B cell (primary cell): ENCODE measurements at regions of chr10 and their contacts with region 1.

Region 1: DNA sequence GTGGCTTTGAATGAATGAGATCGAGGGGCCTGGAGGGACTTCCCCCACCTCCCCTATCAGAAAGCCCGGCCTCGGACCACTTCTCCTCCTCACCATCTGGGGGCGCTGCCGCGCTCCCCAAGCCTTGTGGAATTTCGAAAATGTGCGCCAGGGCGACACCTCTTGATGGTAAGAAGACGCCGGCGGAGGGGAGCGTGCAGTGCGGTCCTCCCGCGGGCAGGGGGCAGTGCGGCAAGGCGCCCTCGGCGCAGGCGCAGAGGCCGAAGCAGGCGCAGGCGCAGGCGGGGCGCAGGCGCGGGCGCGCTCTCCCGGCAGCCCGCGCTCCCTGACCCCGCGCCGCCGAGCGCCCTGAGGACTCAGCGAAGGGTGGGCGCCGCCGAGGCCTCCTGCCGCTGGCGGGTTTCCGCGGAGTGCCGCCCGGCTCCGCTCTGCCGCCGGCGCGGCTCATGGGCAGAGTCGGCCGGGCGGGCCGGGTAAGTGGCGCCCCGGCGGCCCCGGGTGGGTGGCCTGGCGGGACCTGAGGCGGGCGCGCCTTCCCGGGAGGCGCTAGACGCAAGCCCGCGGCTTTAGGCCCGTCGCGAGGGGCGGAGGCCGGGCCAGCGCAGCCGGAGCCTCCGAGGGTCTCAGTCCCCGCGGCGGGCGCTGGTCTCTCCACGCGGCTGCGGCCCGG is at the start of gene RBM17:
- DNase-seq: peak; percentile 99
- ATAC-seq: peak; percentile 88
- H3K4me3 ChIP-seq: peak within 1 kb of the TSS; percentile 70 to 94 (median 77)
- H3K4me3 Mint-ChIP-seq: peak within 1 kb of the TSS; percentile 90
- H3K27ac ChIP-seq: peak within 1 kb of the TSS in 1 of 2 donors; percentile 78
- H3K27ac Mint-ChIP-seq: peak within 1 kb of the TSS; percentile 92
- H3K4me1 ChIP-seq: peaks cover 41 to 43% of the 10 kb centered on the region in 2 donors
- H3K4me1 Mint-ChIP-seq: peaks cover 63% of the 10 kb centered on the region
- H3K27me3 ChIP-seq: no peaks in the 10 kb centered on the region
- H3K27me3 Mint-ChIP-seq: no peaks in the 10 kb centered on the region
- CTCF ChIP-seq: peak; percentile 100
- total RNA-seq, gene RBM17: 162 and 168 TPM in 2 replicates

Region 2: GRCh38 chr10:5840314-5841307 is 248.2 kb before region 1 on chr10:
- CTCF ChIA-PET with region 1: interaction called, 4 read pairs
- POLR2A ChIA-PET with region 1: no interaction called
- intact Hi-C with region 1: loop called (anchors 5 kb)
- DNase-seq: peak; percentile 92
- ATAC-seq: peak; percentile 82
- H3K4me3 ChIP-seq: peak overlapping the region in 4 of 5 experiments; percentile 55 to 63 (median 58)
- H3K4me3 Mint-ChIP-seq: peak overlapping the region; percentile 94
- H3K27ac ChIP-seq: peak overlapping the region; percentile 99 to 100
- H3K27ac Mint-ChIP-seq: peak overlapping the region; percentile 100
- H3K4me1 ChIP-seq: peaks cover 68 to 77% of the 10 kb centered on the region in 2 donors
- H3K4me1 Mint-ChIP-seq: peaks cover 70% of the 10 kb centered on the region
- H3K27me3 ChIP-seq: no peaks in the 10 kb centered on the region
- H3K27me3 Mint-ChIP-seq: no peaks in the 10 kb centered on the region
- CTCF ChIP-seq: no peak

Region 3: GRCh38 chr10:5902511-5903274 is 186.2 kb before region 1 on chr10:
- CTCF ChIA-PET with region 1: no interaction called
- POLR2A ChIA-PET with region 1: no interaction called
- intact Hi-C with region 1: no loop called
- DNase-seq: no peak
- ATAC-seq: no peak
- H3K4me3 ChIP-seq: no peak overlapping the region
- H3K4me3 Mint-ChIP-seq: no peak overlapping the region
- H3K27ac ChIP-seq: no peak overlapping the region
- H3K27ac Mint-ChIP-seq: no peak overlapping the region
- H3K4me1 ChIP-seq: peaks cover 5 to 7% of the 10 kb centered on the region in 2 donors
- H3K4me1 Mint-ChIP-seq: peaks cover 15% of the 10 kb centered on the region
- H3K27me3 ChIP-seq: no peaks in the 10 kb centered on the region
- H3K27me3 Mint-ChIP-seq: no peaks in the 10 kb centered on the region
- CTCF ChIP-seq: no peak

Region 4: GRCh38 chr10:6014241-6014761 is 74.6 kb before region 1 on chr10:
- CTCF ChIA-PET with region 1: interaction called, 94 read pairs
- POLR2A ChIA-PET with region 1: interaction called, 14 read pairs
- intact Hi-C with region 1: loop called (anchors 1 kb)
- DNase-seq: peak; percentile 79
- ATAC-seq: peak; percentile 79
- H3K4me3 ChIP-seq: no peak overlapping the region
- H3K4me3 Mint-ChIP-seq: no peak overlapping the region
- H3K27ac ChIP-seq: peak overlapping the region; percentile 34 to 57
- H3K27ac Mint-ChIP-seq: peak overlapping the region; percentile 67
- H3K4me1 ChIP-seq: peaks cover 4 to 9% of the 10 kb centered on the region in 2 donors
- H3K4me1 Mint-ChIP-seq: peaks cover 10% of the 10 kb centered on the region
- H3K27me3 ChIP-seq: no peaks in the 10 kb centered on the region
- H3K27me3 Mint-ChIP-seq: no peaks in the 10 kb centered on the region
- CTCF ChIP-seq: peak; percentile 86

Region 5: GRCh38 chr10:6050801-6051445 is 37.9 kb before region 1 on chr10:
- CTCF ChIA-PET with region 1: interaction called, 186 read pairs
- POLR2A ChIA-PET with region 1: interaction called, 28 read pairs
- intact Hi-C with region 1: loop called (anchors 1 kb)
- DNase-seq: peak; percentile 96
- ATAC-seq: peak; percentile 66
- H3K4me3 ChIP-seq: peak overlapping the region; percentile 35 to 63 (median 55)
- H3K4me3 Mint-ChIP-seq: peak overlapping the region; percentile 91
- H3K27ac ChIP-seq: peak overlapping the region; percentile 92
- H3K27ac Mint-ChIP-seq: peak overlapping the region; percentile 99
- H3K4me1 ChIP-seq: peaks cover 69 to 82% of the 10 kb centered on the region in 2 donors
- H3K4me1 Mint-ChIP-seq: peaks cover 87% of the 10 kb centered on the region
- H3K27me3 ChIP-seq: no peaks in the 10 kb centered on the region
- H3K27me3 Mint-ChIP-seq: no peaks in the 10 kb centered on the region
- CTCF ChIP-seq: peak; percentile 35

Region 6: GRCh38 chr10:6074489-6075301 is 14.2 kb before region 1 on chr10:
- CTCF ChIA-PET with region 1: interaction called, 163 read pairs
- POLR2A ChIA-PET with region 1: interaction called, 10 read pairs
- intact Hi-C with region 1: loop called (anchors 1 kb)
- DNase-seq: no peak
- ATAC-seq: no peak
- H3K4me3 ChIP-seq: no peak overlapping the region
- H3K4me3 Mint-ChIP-seq: no peak overlapping the region
- H3K27ac ChIP-seq: no peak overlapping the region
- H3K27ac Mint-ChIP-seq: peak overlapping the region; percentile 61
- H3K4me1 ChIP-seq: peaks cover 35 to 38% of the 10 kb centered on the region in 2 donors
- H3K4me1 Mint-ChIP-seq: peaks cover 46% of the 10 kb centered on the region
- H3K27me3 ChIP-seq: no peaks in the 10 kb centered on the region
- H3K27me3 Mint-ChIP-seq: no peaks in the 10 kb centered on the region
- CTCF ChIP-seq: no peak

Region 7: DNA sequence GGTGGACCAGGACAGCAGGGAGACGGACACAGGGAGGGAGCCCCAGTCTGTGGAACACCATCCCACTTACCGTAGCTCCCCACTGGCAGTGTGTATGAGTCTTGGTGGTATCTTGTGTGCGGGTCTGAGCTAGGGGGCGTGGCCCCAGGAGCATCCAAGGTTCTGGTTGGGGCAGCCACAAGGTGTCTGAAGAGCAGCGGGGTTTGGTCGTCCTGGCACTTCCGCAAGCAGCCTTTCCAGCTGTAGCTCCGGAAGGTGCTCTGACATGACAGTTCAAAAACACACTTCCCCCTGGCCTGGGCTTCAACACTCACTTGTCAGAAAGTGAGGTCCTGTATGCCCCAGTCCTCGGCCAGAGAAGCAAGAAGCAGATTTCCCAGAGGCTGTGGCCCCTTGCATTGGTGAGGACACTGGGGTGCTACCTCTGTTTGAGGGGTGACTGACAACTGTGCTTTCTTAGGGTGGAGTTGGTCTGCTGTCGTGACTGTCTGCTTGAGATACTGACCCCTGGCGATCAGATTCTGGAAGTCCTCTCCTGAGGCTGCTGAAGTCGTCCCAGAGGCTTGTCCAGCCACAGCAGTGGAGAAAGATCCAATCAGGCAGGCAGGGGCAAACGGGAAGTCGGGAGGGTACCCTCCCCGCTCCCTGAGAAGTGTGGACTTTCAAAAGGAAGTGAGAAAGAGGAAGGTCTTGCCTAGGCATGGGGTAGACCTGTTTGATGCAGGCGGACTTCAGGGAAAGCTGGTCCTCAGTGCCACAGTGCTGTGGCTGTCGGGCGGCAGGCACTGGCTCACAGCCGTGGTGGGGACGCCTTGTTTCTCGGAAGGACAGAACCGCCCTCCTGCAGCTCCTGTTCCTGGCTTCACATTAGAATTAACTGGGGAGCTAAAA is 62.5 kb after region 1 on chr10:
- CTCF ChIA-PET with region 1: interaction called, 8 read pairs
- POLR2A ChIA-PET with region 1: no interaction called
- intact Hi-C with region 1: loop called (anchors 2 kb)
- DNase-seq: peak; percentile 84
- ATAC-seq: peak; percentile 84
- H3K4me3 ChIP-seq: peak overlapping the region; percentile 6 to 58 (median 26)
- H3K4me3 Mint-ChIP-seq: peak overlapping the region; percentile 85
- H3K27ac ChIP-seq: peak overlapping the region; percentile 40 to 78
- H3K27ac Mint-ChIP-seq: peak overlapping the region; percentile 87
- H3K4me1 ChIP-seq: peaks cover 24 to 34% of the 10 kb centered on the region in 2 donors
- H3K4me1 Mint-ChIP-seq: peaks cover 53% of the 10 kb centered on the region
- H3K27me3 ChIP-seq: no peaks in the 10 kb centered on the region
- H3K27me3 Mint-ChIP-seq: no peaks in the 10 kb centered on the region
- CTCF ChIP-seq: peak; percentile 71

Region 8: DNA sequence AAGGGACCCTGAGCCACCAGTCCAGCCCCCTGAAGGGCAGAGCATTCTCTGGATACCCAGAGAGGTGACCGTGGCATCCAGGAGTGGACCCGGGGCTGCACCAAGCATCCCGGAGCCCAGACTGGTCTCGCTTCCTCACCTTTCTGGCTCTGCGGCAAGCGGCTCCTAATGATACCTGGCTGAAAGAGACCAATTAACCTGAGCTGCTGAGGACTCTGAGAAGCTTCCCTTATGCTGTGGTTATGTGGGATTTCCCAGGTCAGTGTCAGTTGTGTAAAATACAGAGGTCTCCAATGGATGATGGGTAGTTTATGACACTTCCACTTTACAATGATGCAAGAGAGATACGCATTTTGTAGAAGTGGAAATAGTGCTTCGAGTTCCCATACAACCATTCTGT is 165.3 kb after region 1 on chr10:
- CTCF ChIA-PET with region 1: no interaction called
- POLR2A ChIA-PET with region 1: no interaction called
- intact Hi-C with region 1: no loop called
- DNase-seq: no peak
- ATAC-seq: no peak
- H3K4me3 ChIP-seq: no peak overlapping the region
- H3K4me3 Mint-ChIP-seq: no peak overlapping the region
- H3K27ac ChIP-seq: no peak overlapping the region
- H3K27ac Mint-ChIP-seq: no peak overlapping the region
- H3K4me1 ChIP-seq: no peaks in the 10 kb centered on the region
- H3K4me1 Mint-ChIP-seq: no peaks in the 10 kb centered on the region
- H3K27me3 ChIP-seq: no peaks in the 10 kb centered on the region
- H3K27me3 Mint-ChIP-seq: no peaks in the 10 kb centered on the region
- CTCF ChIP-seq: no peak

Region 9: DNA sequence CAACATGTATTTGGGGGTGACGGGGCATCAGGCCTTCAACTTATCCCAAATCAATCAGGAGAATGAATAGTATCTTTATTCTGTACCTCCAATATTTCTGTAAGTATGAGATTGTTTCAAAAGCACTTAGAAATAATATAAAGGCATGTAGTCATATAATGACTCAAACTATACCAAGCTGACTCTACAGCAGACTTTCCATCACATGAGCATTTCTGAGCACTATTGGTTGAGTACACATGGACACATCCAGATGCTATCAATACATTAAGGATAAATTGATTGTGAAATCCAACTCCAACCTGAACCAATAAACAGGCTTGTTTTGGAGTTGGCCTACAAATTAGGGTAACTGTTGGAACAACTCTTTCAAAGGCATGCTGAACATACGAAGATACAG is 1092.6 kb after region 1 on chr10:
- CTCF ChIA-PET with region 1: no interaction called
- POLR2A ChIA-PET with region 1: no interaction called
- intact Hi-C with region 1: no loop called
- DNase-seq: no peak
- ATAC-seq: no peak
- H3K4me3 ChIP-seq: no peak overlapping the region
- H3K4me3 Mint-ChIP-seq: no peak overlapping the region
- H3K27ac ChIP-seq: no peak overlapping the region
- H3K27ac Mint-ChIP-seq: no peak overlapping the region
- H3K4me1 ChIP-seq: peaks cover 21 to 23% of the 10 kb centered on the region in 2 donors
- H3K4me1 Mint-ChIP-seq: peaks cover 32% of the 10 kb centered on the region
- H3K27me3 ChIP-seq: no peaks in the 10 kb centered on the region
- H3K27me3 Mint-ChIP-seq: no peaks in the 10 kb centered on the region
- CTCF ChIP-seq: no peak